ENCODE measurements at regions of chr14 and their contacts with region 1.

Region 1: GRCh38 chr14:74437496-74438053 is 11.6 kb upstream of the SYNDIG1L start:
- DNase-seq: peak in 1 of 2 experiments; percentile 37
- H3K4me3 ChIP-seq: no peak overlapping the region
- H3K4me3 Mint-ChIP-seq: peak overlapping the region; percentile 27
- H3K27ac Mint-ChIP-seq: peak overlapping the region; percentile 65
- H3K4me1 ChIP-seq: peaks cover 28% of the 10 kb centered on the region
- H3K4me1 Mint-ChIP-seq: peaks cover 26% of the 10 kb centered on the region
- H3K27me3 ChIP-seq: no peaks in the 10 kb centered on the region
- H3K27me3 Mint-ChIP-seq: no peaks in the 10 kb centered on the region
- CTCF ChIP-seq: no peak

Region 2: DNA sequence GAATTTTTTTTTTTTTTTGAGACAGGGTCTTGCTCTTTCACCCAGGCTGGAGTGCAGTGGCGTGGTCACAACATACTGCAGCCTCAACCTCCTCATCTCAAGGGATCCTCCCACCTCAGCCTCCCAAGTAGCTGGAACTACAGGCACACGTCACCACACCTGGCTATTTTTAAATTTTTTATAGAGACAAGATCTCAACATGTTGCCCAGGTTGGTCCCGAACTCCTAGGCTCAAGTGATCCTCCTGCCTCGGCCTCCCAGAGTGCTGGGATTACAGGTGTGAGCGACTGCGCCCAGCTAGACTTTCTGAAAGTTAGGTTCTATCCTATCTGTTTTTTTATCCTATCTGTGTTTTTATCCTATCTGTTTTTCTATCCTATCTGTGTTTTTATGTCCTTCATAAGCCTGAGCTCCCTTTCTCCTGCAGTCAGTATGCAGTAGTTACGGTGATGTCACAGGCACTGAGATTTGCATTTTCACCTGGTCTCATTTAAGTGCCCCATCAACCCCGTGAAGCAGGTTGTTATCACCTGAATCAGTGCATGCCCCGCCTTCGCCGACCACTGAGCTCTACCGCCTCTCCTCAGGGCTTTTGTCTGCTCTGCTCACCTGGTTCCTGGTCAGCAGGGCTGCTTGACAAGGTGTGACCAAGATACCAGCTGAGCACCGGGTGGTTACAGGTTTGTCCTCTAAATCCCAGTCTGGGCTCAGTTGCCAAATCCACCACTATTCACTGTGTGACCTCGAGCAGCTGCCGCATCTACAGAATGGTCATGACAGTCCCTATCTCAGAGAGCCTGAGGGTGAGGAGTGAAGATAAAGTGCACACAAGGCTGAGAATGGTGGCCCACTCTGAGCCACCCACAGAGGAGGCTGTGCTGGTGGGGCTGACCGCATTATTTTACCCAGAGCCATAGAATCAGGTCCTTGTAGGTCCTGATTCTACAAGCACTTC is 44.7 kb before region 1 on chr14:
- CTCF ChIA-PET with region 1: no interaction called
- POLR2A ChIA-PET with region 1: no interaction called
- intact Hi-C with region 1: no loop called
- DNase-seq: peak in 1 of 2 experiments; percentile 9
- H3K4me3 ChIP-seq: no peak overlapping the region
- H3K4me3 Mint-ChIP-seq: no peak overlapping the region
- H3K27ac Mint-ChIP-seq: no peak overlapping the region
- H3K4me1 ChIP-seq: no peaks in the 10 kb centered on the region
- H3K4me1 Mint-ChIP-seq: peaks cover 7% of the 10 kb centered on the region
- H3K27me3 ChIP-seq: no peaks in the 10 kb centered on the region
- H3K27me3 Mint-ChIP-seq: no peaks in the 10 kb centered on the region
- CTCF ChIP-seq: no peak

Region 3: DNA sequence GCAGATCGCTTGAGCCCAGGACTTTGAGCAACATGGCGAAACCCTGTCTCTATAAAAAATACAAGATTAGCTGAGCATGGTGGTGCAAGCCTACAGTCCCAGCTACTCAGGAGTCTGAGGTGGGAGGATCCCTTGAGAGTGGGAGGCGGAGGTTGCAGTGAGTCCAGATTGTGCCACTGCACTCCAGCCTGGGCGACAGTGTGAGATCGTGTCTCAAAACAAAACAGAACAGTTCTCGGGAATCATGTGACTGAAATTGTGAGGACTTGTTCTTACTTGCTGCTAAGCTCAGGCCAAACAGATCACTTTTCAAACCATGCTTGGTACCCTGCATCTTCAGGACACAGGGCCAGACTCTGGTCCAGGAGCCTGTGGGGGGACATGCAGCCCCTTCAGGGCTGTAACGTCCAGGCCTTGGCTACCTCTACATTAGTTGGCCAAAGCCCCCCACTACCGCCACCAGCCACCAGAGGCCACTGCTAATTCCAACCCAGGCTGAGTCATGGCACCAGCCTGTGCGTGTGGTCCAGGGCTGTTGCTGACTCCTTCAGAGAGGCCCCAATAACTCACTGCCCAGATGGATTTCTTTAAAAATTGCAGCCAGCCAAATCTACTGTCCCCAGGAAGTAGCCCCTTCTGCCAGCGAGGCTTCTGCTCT is 21.8 kb after region 1 on chr14:
- CTCF ChIA-PET with region 1: no interaction called
- POLR2A ChIA-PET with region 1: no interaction called
- intact Hi-C with region 1: no loop called
- DNase-seq: peak in 1 of 2 experiments; percentile 61
- H3K4me3 ChIP-seq: no peak overlapping the region
- H3K4me3 Mint-ChIP-seq: no peak overlapping the region
- H3K27ac Mint-ChIP-seq: no peak overlapping the region
- H3K4me1 ChIP-seq: no peaks in the 10 kb centered on the region
- H3K4me1 Mint-ChIP-seq: no peaks in the 10 kb centered on the region
- H3K27me3 ChIP-seq: no peaks in the 10 kb centered on the region
- H3K27me3 Mint-ChIP-seq: no peaks in the 10 kb centered on the region
- CTCF ChIP-seq: peak; percentile 52 to 75

Region 4: DNA sequence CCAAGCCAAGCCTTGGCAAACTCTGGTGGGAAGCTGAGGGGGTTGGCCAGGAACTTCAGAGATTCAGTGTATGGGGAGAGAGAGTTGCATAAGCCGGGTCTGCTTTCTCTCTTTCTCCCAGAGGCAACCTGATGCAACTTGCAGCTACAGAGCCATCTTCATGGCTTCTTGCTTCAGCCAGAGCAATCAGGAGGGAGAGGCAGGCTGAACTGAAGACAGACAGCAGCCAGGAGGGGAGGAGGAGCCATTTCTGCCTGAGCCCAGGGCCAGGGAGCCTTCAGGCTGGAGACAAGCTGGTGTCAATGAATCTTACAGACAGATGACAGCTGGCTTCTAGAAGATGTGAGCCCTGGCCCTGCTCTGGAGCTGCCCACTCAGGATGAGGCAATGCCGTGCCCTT is 36.8 kb after region 1 on chr14:
- CTCF ChIA-PET with region 1: no interaction called
- POLR2A ChIA-PET with region 1: no interaction called
- intact Hi-C with region 1: no loop called
- DNase-seq: no peak
- H3K4me3 ChIP-seq: no peak overlapping the region
- H3K4me3 Mint-ChIP-seq: no peak overlapping the region
- H3K27ac Mint-ChIP-seq: no peak overlapping the region
- H3K4me1 ChIP-seq: no peaks in the 10 kb centered on the region
- H3K4me1 Mint-ChIP-seq: no peaks in the 10 kb centered on the region
- H3K27me3 ChIP-seq: no peaks in the 10 kb centered on the region
- H3K27me3 Mint-ChIP-seq: no peaks in the 10 kb centered on the region
- CTCF ChIP-seq: no peak

Region 5: GRCh38 chr14:74493343-74494261 is 56.0 kb after region 1 on chr14 and contains the start of gene ISCA2:
- CTCF ChIA-PET with region 1: no interaction called
- POLR2A ChIA-PET with region 1: interaction called, 4 read pairs
- intact Hi-C with region 1: loop called (anchors 5 kb)
- DNase-seq: peak; percentile 100
- H3K4me3 ChIP-seq: peak within 1 kb of the TSS; percentile 97
- H3K4me3 Mint-ChIP-seq: no peak within 1 kb of the TSS
- H3K27ac Mint-ChIP-seq: no peak within 1 kb of the TSS
- H3K4me1 ChIP-seq: peaks cover 27% of the 10 kb centered on the region
- H3K4me1 Mint-ChIP-seq: peaks cover 6% of the 10 kb centered on the region
- H3K27me3 ChIP-seq: no peaks in the 10 kb centered on the region
- H3K27me3 Mint-ChIP-seq: no peaks in the 10 kb centered on the region
- CTCF ChIP-seq: no peak
- total RNA-seq, gene ISCA2: 28.5 and 33.0 TPM in 2 replicates

Measured in Caco-2 (cell line).